ENCODE measurements at regions of chr20 and their contacts with region 1.

Region 1: DNA sequence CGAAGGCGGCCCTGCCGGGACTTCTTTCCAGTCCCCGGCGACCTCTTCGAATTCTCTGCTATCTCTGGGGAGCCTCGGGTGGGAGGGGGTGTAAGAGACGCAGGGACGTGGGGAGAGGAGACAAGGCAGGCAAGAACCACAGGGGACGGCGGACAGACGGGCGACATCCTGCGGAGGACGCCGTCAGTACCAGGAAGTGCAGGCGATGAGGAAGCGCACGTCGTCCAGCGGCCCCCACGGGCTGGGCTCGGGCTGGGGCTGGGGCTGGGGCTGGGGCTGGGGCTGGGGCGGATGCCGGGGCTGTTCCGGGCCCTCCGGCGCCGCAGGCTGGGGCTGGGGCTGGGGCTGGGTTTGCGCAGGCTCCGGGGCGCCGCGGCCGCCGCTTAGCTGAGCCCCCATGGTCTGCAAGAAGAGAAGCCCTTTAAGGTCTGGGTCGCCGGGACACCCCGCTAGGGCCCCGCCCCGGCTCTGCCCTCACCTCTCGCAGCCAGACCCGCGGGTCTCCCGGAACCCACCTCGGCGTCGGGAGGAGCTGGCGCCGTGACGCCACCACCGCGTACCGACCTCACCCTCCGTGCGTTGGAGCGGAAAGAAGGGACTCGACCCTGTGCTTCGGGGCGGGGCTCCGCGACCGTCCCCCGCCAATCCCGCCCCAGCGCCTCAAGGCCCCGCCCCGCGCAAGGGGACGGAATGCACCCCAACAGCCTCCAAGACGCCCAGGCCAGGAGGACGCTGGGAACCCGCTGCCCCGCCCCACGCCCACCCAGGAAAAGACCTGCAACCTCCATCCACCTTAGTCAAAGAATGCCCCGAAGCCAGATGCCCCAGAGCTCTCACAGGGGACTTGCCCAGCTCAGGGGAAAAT is at the start of gene MMP24OS:
- DNase-seq: peak; percentile 91 to 94 (median 93)
- ATAC-seq: peak; percentile 89 to 96 (median 94)
- H3K4me3 ChIP-seq: peak within 1 kb of the TSS; percentile 76 to 87 (median 80)
- H3K27ac ChIP-seq: peak within 1 kb of the TSS; percentile 91 to 97 (median 94)
- H3K4me1 ChIP-seq: peaks cover 0 to 15% (median 4%) of the 10 kb centered on the region in 4 donors
- H3K27me3 ChIP-seq: no peaks in the 10 kb centered on the region
- CTCF ChIP-seq: peak in 3 of 4 donors; percentile 19 to 33 (median 29)
- POLR2A ChIP-seq: peak; percentile 90
- total RNA-seq, gene MMP24OS: 13.3 to 40.7 (median 23.5) TPM

Region 2: GRCh38 chr20:35146920-35147574 is 130.7 kb before region 1 on chr20 and contains the start of gene EDEM2:
- intact Hi-C with region 1: loop called (anchors 5 to 10 kb)
- DNase-seq: peak; percentile 95 to 97 (median 96)
- ATAC-seq: peak; percentile 88 to 91 (median 90)
- H3K4me3 ChIP-seq: peak within 1 kb of the TSS; percentile 63 to 73 (median 71)
- H3K27ac ChIP-seq: peak within 1 kb of the TSS; percentile 74 to 90 (median 86)
- H3K4me1 ChIP-seq: peaks cover 0 to 21% (median 4%) of the 10 kb centered on the region in 4 donors
- H3K27me3 ChIP-seq: no peaks in the 10 kb centered on the region
- CTCF ChIP-seq: peak in 1 of 4 donors; percentile 9
- POLR2A ChIP-seq: peak; percentile 66
- total RNA-seq, gene EDEM2: 20.1 to 28.0 (median 23.9) TPM

Region 3: GRCh38 chr20:35215066-35215956 is 62.5 kb before region 1 on chr20:
- intact Hi-C with region 1: loop called in 1 of 2 experiments (anchors 10 kb)
- DNase-seq: no peak
- ATAC-seq: no peak
- H3K4me3 ChIP-seq: no peak overlapping the region
- H3K27ac ChIP-seq: no peak overlapping the region
- H3K4me1 ChIP-seq: no peaks in the 10 kb centered on the region
- H3K27me3 ChIP-seq: no peaks in the 10 kb centered on the region
- CTCF ChIP-seq: no peak
- POLR2A ChIP-seq: no peak

Region 4: GRCh38 chr20:35226775-35227681 is 50.7 kb before region 1 on chr20:
- intact Hi-C with region 1: no loop called
- DNase-seq: peak in 2 of 3 donors; percentile 44 to 46
- ATAC-seq: peak; percentile 73 to 81 (median 79)
- H3K4me3 ChIP-seq: peak overlapping the region in 1 of 3 donors; percentile 27
- H3K27ac ChIP-seq: no peak overlapping the region
- H3K4me1 ChIP-seq: no peaks in the 10 kb centered on the region
- H3K27me3 ChIP-seq: no peaks in the 10 kb centered on the region
- CTCF ChIP-seq: no peak
- POLR2A ChIP-seq: no peak

Region 5: GRCh38 chr20:35454881-35455609 is 177.3 kb after region 1 on chr20 and contains the start of gene CEP250:
- intact Hi-C with region 1: no loop called
- DNase-seq: peak; percentile 96
- ATAC-seq: peak; percentile 96 to 99 (median 98)
- H3K4me3 ChIP-seq: peak within 1 kb of the TSS; percentile 75 to 96 (median 88)
- H3K27ac ChIP-seq: peak within 1 kb of the TSS; percentile 95 to 97 (median 96)
- H3K4me1 ChIP-seq: no peaks in the 10 kb centered on the region
- H3K27me3 ChIP-seq: no peaks in the 10 kb centered on the region
- CTCF ChIP-seq: no peak
- POLR2A ChIP-seq: no peak
- total RNA-seq, gene CEP250: 5.9 to 11.2 (median 9.0) TPM

Measured in right lobe of liver (tissue), 6 donors.